Common myeloid progenitor, CD34-positive (primary cell): ENCODE measurements at regions of chr12 and their contacts with region 1.

Region 1: GRCh38 chr12:53159195-53159839 is 21.2 kb upstream of the ZNF740 start:
- DNase-seq: peak; percentile 81 to 90 (median 85)
- H3K4me3 ChIP-seq: no peak overlapping the region
- H3K27ac ChIP-seq: no peak overlapping the region
- H3K4me1 ChIP-seq: peaks cover 0 to 8% (median 2%) of the 10 kb centered on the region in 4 experiments
- H3K27me3 ChIP-seq: no peaks in the 10 kb centered on the region

Region 2: DNA sequence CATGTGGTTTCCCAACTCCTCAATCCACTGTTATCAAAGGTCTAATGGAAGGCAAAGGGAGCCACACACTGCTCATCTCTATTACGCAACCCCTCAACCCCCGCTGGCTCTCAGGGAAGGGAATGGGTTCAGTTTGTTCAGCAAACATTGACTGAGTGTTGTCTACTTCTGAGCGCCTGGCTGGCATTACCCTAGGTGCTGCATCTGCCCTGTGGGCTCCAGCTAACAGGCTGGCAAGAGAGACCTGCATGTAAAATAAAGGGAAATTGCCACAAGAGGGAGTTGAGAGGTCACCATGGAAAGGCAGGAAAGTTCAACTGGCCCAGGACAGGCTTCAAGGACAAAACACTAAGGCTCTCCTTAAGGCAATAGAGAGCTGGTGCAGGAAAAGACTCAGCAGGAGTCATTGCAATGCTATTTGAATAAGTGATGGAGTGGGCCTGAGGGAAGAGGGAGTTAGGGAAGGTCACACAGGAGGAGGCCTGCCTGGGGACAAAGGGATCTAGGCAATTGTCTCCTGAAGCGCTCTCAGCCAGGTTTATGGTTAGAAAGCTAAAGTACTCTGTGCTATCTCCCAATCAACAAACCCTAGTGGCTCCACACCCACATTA is 15.7 kb after region 1 on chr12:
- CTCF ChIA-PET with region 1: interaction called, 41 read pairs
- POLR2A ChIA-PET with region 1: no interaction called
- DNase-seq: peak in 2 of 3 donors; percentile 32 to 43
- H3K4me3 ChIP-seq: no peak overlapping the region
- H3K27ac ChIP-seq: no peak overlapping the region
- H3K4me1 ChIP-seq: peaks cover 3 to 12% (median 8%) of the 10 kb centered on the region in 4 experiments
- H3K27me3 ChIP-seq: no peaks in the 10 kb centered on the region

Region 3: DNA sequence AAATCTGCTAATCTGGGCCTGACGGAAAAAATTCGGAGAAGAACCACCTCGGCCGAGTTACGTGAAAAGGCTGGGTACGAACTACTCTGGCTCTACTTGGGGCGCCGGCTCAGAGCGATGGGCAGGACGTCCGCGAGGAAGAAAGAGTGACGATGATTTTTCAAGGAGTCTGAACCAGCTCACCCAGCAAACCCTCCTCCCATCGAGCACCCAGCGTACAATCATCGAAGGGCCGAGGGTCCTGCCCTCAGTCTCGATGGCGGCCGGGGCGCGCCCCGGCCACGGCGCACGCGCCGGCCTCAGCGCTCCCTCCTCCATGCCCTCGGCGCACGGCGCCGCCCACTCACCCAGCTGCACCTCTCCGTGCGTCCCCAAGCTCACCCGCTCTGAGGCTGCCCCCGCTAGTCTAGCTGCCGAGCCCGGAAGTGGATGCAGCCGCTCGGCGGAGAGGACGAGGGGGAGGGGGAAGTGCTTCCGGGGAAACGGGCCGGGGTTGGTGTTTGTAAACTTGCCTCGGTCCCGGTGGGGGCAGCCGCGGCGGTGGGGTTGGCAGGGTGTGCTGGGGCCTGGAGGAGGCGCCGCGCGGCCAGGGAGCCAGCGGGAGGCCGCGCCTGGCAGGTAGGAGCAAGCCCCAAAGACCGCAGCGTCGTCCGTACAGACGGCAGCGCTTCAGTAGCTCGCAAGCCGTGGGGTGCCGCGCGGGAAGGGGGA is 21.1 kb after region 1 on chr12 and contains the starts of genes CSAD and ZNF740:
- CTCF ChIA-PET with region 1: interaction called, 41 read pairs
- POLR2A ChIA-PET with region 1: no interaction called
- DNase-seq: peak; percentile 97 to 98 (median 98)
- H3K4me3 ChIP-seq: peak within 1 kb of the TSS; percentile 51 to 87 (median 76)
- H3K27ac ChIP-seq: peak within 1 kb of the TSS; percentile 74 to 90
- H3K4me1 ChIP-seq: peaks cover 23 to 38% (median 32%) of the 10 kb centered on the region in 4 experiments
- H3K27me3 ChIP-seq: no peaks in the 10 kb centered on the region

Region 4: DNA sequence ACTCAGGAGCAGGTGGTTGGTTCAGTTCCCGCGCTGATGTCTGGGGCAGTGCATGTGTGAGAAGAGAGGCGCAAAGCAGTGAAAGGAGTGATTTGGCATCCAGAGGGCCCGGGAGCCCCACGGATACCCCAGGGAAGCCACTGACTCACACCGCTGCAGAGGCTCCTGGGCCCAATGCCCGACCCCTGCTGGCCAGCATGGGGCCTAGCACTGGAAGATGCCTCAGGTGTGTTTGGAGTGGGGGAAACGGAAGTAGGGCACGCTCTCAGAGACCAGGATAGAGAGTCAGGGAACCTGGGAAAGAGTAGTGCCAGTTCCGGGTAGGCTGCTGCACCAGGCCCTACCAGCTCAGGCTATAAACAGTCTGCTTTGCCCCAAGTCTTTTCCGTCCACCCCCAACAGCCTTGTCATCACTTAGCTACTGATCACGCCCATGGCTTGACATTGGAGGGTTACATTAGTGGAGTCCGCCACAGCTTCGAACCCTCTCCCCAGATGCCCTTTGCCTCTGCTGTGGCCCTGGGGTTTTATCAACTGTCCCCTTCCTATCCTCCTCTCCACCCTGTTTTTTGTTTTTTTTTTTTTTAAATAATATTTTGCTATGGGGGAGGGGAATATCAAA is 30.9 kb after region 1 on chr12:
- CTCF ChIA-PET with region 1: interaction called, 97 read pairs
- POLR2A ChIA-PET with region 1: no interaction called
- DNase-seq: peak in 2 of 3 donors; percentile 54 to 65
- H3K4me3 ChIP-seq: no peak overlapping the region
- H3K27ac ChIP-seq: no peak overlapping the region
- H3K4me1 ChIP-seq: peaks cover 0 to 2% (median 0%) of the 10 kb centered on the region in 4 experiments
- H3K27me3 ChIP-seq: no peaks in the 10 kb centered on the region

Region 5: GRCh38 chr12:53200458-53201176 is 41.3 kb after region 1 on chr12:
- CTCF ChIA-PET with region 1: interaction called, 97 read pairs
- POLR2A ChIA-PET with region 1: interaction called, 6 read pairs
- DNase-seq: peak in 2 of 3 donors; percentile 40 to 57
- H3K4me3 ChIP-seq: no peak overlapping the region
- H3K27ac ChIP-seq: peak overlapping the region in 1 of 2 experiments; percentile 49
- H3K4me1 ChIP-seq: peaks cover 9 to 47% (median 39%) of the 10 kb centered on the region in 4 experiments
- H3K27me3 ChIP-seq: no peaks in the 10 kb centered on the region

Region 6: DNA sequence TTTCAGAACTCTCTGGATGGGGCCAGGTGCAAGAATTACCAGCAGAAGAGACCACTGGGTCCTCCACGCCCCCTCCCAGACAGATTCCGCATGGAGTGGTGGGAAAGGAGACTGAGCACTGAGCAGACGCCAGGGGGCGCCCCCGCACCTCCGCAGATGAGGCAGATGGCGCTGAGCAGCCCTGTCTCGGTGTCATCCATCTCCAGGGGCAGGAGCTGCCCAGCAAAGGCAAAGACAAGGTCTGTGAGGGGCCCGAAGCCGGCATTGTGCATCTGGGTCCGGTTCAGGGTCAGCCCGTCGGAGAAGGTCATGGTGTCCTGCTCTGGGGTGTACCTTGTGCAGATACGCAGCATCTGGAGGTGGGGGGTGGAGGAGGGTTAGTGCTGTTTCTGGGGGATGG is 54.0 kb after region 1 on chr12:
- CTCF ChIA-PET with region 1: interaction called, 23 read pairs
- POLR2A ChIA-PET with region 1: no interaction called
- DNase-seq: peak; percentile 78 to 86 (median 82)
- H3K4me3 ChIP-seq: no peak overlapping the region
- H3K27ac ChIP-seq: no peak overlapping the region
- H3K4me1 ChIP-seq: peaks cover 2 to 65% (median 55%) of the 10 kb centered on the region in 4 experiments
- H3K27me3 ChIP-seq: no peaks in the 10 kb centered on the region

Region 7: DNA sequence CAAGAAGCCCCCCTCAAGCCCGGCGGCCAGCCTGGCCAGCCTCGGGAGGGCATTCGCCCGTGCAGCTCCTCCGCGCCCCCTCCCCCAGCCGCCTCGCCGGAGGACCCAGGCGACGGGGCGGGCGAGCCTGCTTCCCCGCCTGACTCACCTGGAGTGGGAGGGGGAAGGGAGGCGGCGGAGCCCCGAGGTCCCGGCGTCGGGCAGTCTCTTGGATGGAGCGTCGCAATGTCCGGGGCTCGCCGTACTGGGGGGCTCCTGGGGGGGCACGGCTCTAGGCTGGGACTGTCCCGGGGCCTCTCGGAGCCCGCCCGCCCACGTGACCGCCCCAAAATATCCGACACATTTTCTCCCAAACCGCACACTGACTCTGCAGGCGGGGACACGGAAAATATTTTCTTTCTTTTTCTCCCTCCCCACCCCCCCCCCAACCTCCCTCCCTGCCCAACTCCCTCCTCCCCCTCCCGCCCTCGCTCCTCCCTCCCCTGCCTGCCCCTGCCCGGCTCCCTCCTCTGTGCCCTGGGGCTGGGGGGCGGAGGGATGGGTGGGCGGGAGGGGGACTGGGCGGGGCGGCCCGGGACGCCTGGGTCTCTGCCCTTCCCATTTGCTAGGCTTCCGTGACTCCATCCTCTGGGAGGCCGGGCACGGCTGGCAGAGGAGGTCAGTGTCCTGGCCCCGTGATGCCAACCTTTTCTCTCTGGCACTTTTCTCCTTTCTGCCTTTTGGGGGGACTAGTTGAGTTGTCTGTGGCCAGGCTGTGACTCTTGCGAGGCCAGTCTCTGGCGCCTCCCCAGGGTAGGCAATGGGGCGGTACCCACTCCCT is 72.7 kb after region 1 on chr12 and contains the start of gene RARG:
- CTCF ChIA-PET with region 1: no interaction called
- POLR2A ChIA-PET with region 1: no interaction called
- DNase-seq: peak in 2 of 3 donors; percentile 56 to 65
- H3K4me3 ChIP-seq: peak within 1 kb of the TSS; percentile 20 to 79 (median 58)
- H3K27ac ChIP-seq: no peak within 1 kb of the TSS
- H3K4me1 ChIP-seq: peaks cover 2 to 41% (median 35%) of the 10 kb centered on the region in 4 experiments
- H3K27me3 ChIP-seq: peaks cover 0 to 4% (median 0%) of the 10 kb centered on the region in 5 experiments

Region 8: DNA sequence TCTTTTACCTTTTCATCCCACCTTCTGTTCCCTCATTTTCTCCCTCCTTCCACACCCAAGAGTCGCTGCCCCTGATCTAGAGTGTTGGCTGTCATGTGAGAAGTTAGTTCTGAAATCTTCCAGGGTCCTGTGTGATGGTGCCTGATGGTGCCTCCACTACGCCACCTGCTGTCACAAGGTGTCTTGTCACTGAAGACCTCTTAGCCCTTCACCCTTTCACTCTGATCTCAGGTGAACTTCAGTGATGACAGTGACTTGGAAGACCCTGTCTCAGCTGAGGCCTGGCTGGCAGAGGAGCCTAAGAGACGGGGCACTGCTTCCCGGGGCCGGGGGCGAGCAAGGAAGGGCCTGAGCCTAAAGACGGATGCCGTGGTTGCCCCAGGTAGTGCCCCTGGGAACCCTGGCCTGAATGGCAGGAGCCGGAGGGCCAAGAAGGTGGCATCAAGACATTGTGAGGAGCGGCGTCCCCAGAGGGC is 128.5 kb after region 1 on chr12:
- CTCF ChIA-PET with region 1: interaction called, 22 read pairs
- POLR2A ChIA-PET with region 1: interaction called, 3 read pairs
- DNase-seq: peak; percentile 69 to 80 (median 73)
- H3K4me3 ChIP-seq: no peak overlapping the region
- H3K27ac ChIP-seq: no peak overlapping the region
- H3K4me1 ChIP-seq: no peaks in the 10 kb centered on the region
- H3K27me3 ChIP-seq: no peaks in the 10 kb centered on the region